Kidney (tissue), 22 donors: ENCODE measurements at regions of chr15 and their contacts with region 1.

Region 1: GRCh38 chr15:35293353-35294130 is 208.4 kb upstream of the NANOGP8 start:
- DNase-seq: peak in 1 of 5 donors; percentile 45
- H3K4me3 ChIP-seq: no peak overlapping the region
- H3K27ac ChIP-seq: no peak overlapping the region
- H3K4me1 ChIP-seq: no peaks in the 10 kb centered on the region
- H3K27me3 ChIP-seq: no peaks in the 10 kb centered on the region
- CTCF ChIP-seq: no peak

Region 2: DNA sequence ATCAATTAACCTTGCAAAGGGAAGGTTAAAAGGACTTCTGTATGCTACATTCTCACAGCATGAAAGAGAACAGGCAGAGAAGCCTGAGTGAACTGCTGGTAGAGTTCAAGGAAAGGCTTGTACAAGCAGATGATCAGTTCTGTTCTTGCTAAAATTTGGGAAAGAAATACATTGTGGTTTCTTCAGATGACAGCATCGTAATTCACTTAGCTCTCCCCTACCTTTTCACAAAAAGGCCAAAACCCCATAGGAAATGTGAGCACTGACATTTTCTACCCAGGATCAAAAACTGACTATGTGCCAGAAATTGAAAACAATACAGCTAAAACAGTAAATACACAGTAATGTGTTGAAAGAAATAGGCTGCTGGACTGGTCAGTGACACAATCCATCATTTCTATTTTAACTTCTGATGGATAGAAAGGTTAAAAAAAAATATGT is 36.0 kb after region 1 on chr15:
- intact Hi-C with region 1: no loop called
- DNase-seq: peak in 2 of 5 donors; percentile 65 to 66
- H3K4me3 ChIP-seq: no peak overlapping the region
- H3K27ac ChIP-seq: no peak overlapping the region
- H3K4me1 ChIP-seq: peaks cover 0 to 3% (median 0%) of the 10 kb centered on the region in 3 donors
- H3K27me3 ChIP-seq: no peaks in the 10 kb centered on the region
- CTCF ChIP-seq: no peak

Region 3: GRCh38 chr15:35444557-35445204 is 151.1 kb after region 1 on chr15:
- intact Hi-C with region 1: loop called (anchors 10 kb)
- DNase-seq: peak in 2 of 5 donors; percentile 43 to 59
- H3K4me3 ChIP-seq: no peak overlapping the region
- H3K27ac ChIP-seq: no peak overlapping the region
- H3K4me1 ChIP-seq: no peaks in the 10 kb centered on the region
- H3K27me3 ChIP-seq: no peaks in the 10 kb centered on the region
- CTCF ChIP-seq: peak; percentile 74